HepG2 (cell line): ENCODE measurements at regions of chr16 and their contacts with region 1.

Region 1: GRCh38 chr16:81737885-81738786 is 41.0 kb upstream of the PLCG2 start:
- DNase-seq: peak; percentile 74
- ATAC-seq: peak; percentile 92
- H3K4me3 ChIP-seq: peak overlapping the region in 2 of 3 experiments; percentile 3 to 60; a peak in 4 of 6 replicates
- H3K27ac ChIP-seq: no peak overlapping the region
- H3K4me1 ChIP-seq: peaks cover 16% of the 10 kb centered on the region
- H3K27me3 ChIP-seq: peaks cover 0 to 31% of the 10 kb centered on the region in 2 experiments; a peak in 4 of 5 replicates
- CTCF ChIP-seq: peak; percentile 94
- EP300 ChIP-seq: no peak
- POLR2A ChIP-seq: no peak
- RAD21 ChIP-seq: peak; percentile 89

Region 2: DNA sequence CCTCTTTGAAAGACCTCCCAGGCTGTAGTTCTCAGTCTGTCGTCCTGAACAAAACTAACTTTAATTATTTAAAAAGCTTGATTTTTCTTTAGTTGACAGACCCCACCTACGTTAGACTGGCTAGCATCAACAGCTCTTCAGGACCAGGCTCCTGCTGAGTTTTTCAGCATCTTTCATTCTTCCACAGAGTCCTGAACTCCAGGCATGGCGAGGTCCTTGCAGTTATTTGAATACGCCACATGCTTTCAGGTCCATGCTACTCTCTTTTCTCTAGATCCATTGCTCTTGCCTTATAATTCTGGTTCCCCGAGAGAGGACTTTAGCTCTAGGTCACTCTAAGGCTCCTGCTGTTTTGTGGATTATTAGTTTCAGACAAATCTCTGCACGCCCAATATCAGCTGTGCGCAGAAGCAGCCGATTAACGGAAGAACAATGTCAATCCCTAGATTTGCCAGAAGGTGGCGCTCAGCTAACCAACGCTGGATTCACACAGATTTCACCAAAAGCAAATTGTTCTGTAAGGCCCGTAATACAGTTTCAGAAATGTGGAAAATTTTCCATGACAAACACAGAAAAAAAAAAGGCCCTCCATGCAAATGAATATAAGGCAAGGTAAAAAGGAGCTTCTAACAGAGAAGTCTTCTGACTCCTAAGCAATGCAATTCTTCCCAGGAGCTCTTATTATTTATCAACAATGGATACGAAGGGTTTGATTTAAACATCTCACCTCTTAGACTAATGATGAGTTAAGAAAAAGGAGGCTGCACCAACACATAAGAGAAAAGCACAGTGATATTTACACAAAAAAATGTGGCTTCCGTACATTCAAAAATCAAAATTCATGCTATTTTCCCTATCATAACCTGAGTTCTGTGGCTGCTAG is 533.1 kb before region 1 on chr16:
- CTCF ChIA-PET with region 1: interaction called, 13 read pairs
- POLR2A ChIA-PET with region 1: no interaction called
- in situ Hi-C with region 1: loop called (anchors 10 kb)
- intact Hi-C with region 1: loop called (anchors 1 kb)
- DNase-seq: peak; percentile 61
- ATAC-seq: peak; percentile 60
- H3K4me3 ChIP-seq: no peak overlapping the region
- H3K27ac ChIP-seq: no peak overlapping the region
- H3K4me1 ChIP-seq: no peaks in the 10 kb centered on the region
- H3K27me3 ChIP-seq: peaks cover 7 to 49% of the 10 kb centered on the region in 2 experiments; a peak in 4 of 5 replicates
- CTCF ChIP-seq: peak; percentile 67
- EP300 ChIP-seq: no peak
- POLR2A ChIP-seq: no peak
- RAD21 ChIP-seq: peak; percentile 24; the same call in 1 of the 2 replicates

Region 3: GRCh38 chr16:81261049-81261648 is 477.0 kb before region 1 on chr16:
- CTCF ChIA-PET with region 1: no interaction called
- POLR2A ChIA-PET with region 1: no interaction called
- in situ Hi-C with region 1: no loop called
- intact Hi-C with region 1: loop called (anchors 5 kb)
- DNase-seq: peak; percentile 36
- ATAC-seq: peak; percentile 74
- H3K4me3 ChIP-seq: no peak overlapping the region
- H3K27ac ChIP-seq: no peak overlapping the region
- H3K4me1 ChIP-seq: no peaks in the 10 kb centered on the region
- H3K27me3 ChIP-seq: 0 out of 5 replicates have a peak, but pooled peaks cover 0 to 5% of the 10 kb centered on the region in 2 experiments
- CTCF ChIP-seq: peak; percentile 59
- EP300 ChIP-seq: no peak
- POLR2A ChIP-seq: no peak
- RAD21 ChIP-seq: no peak

Region 4: GRCh38 chr16:81366316-81366932 is 371.7 kb before region 1 on chr16:
- CTCF ChIA-PET with region 1: interaction called, 16 read pairs
- POLR2A ChIA-PET with region 1: no interaction called
- in situ Hi-C with region 1: loop called (anchors 5 kb)
- intact Hi-C with region 1: loop called (anchors 1 kb)
- DNase-seq: peak; percentile 38
- ATAC-seq: peak; percentile 72
- H3K4me3 ChIP-seq: no peak overlapping the region
- H3K27ac ChIP-seq: no peak overlapping the region
- H3K4me1 ChIP-seq: no peaks in the 10 kb centered on the region
- H3K27me3 ChIP-seq: no peaks in the 10 kb centered on the region
- CTCF ChIP-seq: peak; percentile 71
- EP300 ChIP-seq: no peak
- POLR2A ChIP-seq: no peak
- RAD21 ChIP-seq: peak; percentile 67

Region 5: DNA sequence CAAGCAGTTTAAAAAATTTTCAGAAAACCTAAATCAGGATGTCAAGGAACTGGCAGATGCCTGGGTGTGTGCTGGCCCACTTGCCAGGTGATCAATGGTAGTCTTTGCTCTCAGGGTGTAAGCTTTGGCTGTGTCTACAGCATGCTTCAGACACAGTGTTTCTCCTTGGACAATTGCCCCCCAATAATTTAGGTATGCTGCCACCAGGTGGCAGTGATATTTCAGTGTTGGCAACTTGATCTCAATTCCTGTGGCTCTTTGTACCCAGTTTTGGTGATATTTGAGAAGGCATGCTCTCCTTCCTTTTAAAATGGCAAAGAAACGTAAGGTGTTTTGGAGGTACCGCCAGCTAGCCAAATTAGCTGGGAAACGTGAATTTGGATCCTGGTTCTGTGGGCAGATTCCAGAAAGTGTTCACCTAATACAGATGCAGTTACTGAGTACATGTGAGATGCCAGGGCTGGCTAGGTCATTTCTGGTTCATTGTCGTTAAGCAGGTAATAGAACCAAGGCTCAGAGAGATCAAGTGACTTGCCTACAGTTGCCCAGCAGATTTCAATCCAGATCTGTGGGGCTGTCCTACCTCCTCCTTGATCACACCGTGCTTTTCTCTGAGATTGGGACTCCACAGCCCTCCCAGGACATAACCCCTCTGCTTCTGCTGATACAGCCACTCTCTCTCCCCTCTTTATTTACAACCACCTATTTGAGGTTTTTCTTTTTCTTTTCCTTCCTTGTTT is 114.6 kb before region 1 on chr16:
- CTCF ChIA-PET with region 1: no interaction called
- POLR2A ChIA-PET with region 1: no interaction called
- in situ Hi-C with region 1: no loop called
- intact Hi-C with region 1: loop called (anchors 5 kb)
- DNase-seq: peak; percentile 50
- ATAC-seq: peak; percentile 14; the same call in 2 of the 3 replicates
- H3K4me3 ChIP-seq: no peak overlapping the region
- H3K27ac ChIP-seq: peak overlapping the region; percentile 82
- H3K4me1 ChIP-seq: peaks cover 37% of the 10 kb centered on the region
- H3K27me3 ChIP-seq: no peaks in the 10 kb centered on the region
- CTCF ChIP-seq: peak; percentile 83
- EP300 ChIP-seq: no peak
- POLR2A ChIP-seq: no peak
- RAD21 ChIP-seq: peak; percentile 21; the same call in 1 of the 2 replicates

Region 6: GRCh38 chr16:81873843-81874752 is 136.0 kb after region 1 on chr16:
- CTCF ChIA-PET with region 1: interaction called, 3 read pairs
- POLR2A ChIA-PET with region 1: no interaction called
- in situ Hi-C with region 1: no loop called
- intact Hi-C with region 1: loop called (anchors 5 kb)
- DNase-seq: peak; percentile 45
- ATAC-seq: peak; percentile 91
- H3K4me3 ChIP-seq: no peak overlapping the region
- H3K27ac ChIP-seq: no peak overlapping the region
- H3K4me1 ChIP-seq: no peaks in the 10 kb centered on the region
- H3K27me3 ChIP-seq: peaks cover 0 to under 1% of the 10 kb centered on the region in 2 experiments; a peak in 4 of 5 replicates
- CTCF ChIP-seq: peak; percentile 70
- EP300 ChIP-seq: no peak
- POLR2A ChIP-seq: no peak
- RAD21 ChIP-seq: no peak